Activated naive CD4-positive, alpha-beta T cell treated with anti-CD3 and anti-CD28 coated beads for 36 hours (primary cell): ENCODE measurements at regions of chr7 and their contacts with region 1.

Region 1: GRCh38 chr7:139340037-139340807 is 915 bp upstream of the FMC1 start:
- DNase-seq: peak; percentile 100
- H3K4me3 Mint-ChIP-seq: peak overlapping the region; percentile 93
- H3K27ac Mint-ChIP-seq: peak overlapping the region; percentile 99
- H3K4me1 Mint-ChIP-seq: peaks cover 22% of the 10 kb centered on the region
- H3K27me3 Mint-ChIP-seq: peaks cover 3% of the 10 kb centered on the region

Region 2: DNA sequence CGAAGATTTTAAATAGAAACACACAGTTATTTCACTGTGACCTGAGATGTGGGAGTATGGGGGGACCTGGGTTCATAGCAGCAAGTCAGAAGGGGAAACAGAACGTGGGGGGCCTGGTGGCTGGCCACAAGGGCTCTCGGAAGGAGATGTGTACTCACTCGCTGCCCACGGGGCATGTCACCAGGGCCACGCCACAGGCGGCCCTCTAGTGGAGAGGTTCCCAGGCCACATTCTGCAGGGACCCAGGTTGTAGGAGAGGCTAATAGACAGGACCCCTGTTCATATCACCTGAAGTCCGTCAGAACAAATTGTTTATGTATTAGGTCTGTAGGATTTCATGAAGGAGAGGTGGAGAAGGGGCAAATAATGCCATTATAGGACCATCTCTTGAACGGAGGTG is 613.9 kb before region 1 on chr7:
- CTCF ChIA-PET with region 1: no interaction called
- intact Hi-C with region 1: no loop called
- DNase-seq: no peak
- H3K4me3 Mint-ChIP-seq: no peak overlapping the region
- H3K27ac Mint-ChIP-seq: no peak overlapping the region
- H3K4me1 Mint-ChIP-seq: no peaks in the 10 kb centered on the region
- H3K27me3 Mint-ChIP-seq: no peaks in the 10 kb centered on the region

Region 3: DNA sequence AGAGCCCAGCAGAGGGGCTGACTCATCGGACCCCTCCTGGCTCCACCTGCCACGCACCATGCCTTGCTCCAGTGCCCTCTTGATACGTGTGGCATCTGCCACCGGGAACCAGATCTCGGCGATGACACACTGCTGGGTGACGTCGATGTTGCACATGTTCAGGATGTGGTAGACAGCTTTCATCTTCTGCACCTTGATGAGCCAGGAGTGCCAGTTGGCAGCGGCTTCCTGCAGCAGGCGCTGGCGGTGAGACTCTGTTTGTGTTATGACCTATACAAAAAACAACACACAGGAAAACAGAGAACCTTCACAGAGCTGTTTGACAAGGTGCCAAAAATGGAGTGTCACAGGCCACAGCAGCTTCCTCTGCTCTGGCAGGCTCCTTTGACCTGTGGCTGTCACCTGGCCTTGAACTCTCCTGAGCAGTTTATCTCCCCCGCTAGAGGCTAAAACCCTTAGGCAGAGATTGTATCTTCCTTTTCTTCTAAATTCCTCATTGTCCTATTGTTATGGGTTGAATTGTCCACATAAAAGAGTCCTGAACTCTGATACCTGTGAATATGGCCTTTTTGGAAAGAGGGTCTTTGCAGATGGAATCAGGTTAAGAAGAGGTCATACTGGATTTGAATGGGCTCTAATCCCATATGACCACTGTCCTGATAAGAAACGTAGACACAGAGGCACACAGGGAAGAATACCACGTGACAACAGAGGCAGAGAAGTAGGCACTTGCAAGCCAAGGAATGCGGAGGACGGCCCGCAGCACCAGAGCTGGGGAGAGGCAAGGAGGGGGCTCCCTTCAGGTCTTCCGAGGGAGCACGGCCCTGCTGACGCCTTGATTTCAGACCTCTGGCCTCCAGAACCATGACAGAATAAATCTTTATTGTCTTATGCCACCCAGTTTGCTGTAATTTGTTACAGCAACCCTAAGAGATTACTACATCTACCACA is 587.4 kb before region 1 on chr7:
- CTCF ChIA-PET with region 1: no interaction called
- intact Hi-C with region 1: loop called (anchors 1 kb)
- DNase-seq: peak; percentile 98
- H3K4me3 Mint-ChIP-seq: no peak overlapping the region
- H3K27ac Mint-ChIP-seq: peak overlapping the region; percentile 80
- H3K4me1 Mint-ChIP-seq: peaks cover 55% of the 10 kb centered on the region
- H3K27me3 Mint-ChIP-seq: no peaks in the 10 kb centered on the region

Region 4: DNA sequence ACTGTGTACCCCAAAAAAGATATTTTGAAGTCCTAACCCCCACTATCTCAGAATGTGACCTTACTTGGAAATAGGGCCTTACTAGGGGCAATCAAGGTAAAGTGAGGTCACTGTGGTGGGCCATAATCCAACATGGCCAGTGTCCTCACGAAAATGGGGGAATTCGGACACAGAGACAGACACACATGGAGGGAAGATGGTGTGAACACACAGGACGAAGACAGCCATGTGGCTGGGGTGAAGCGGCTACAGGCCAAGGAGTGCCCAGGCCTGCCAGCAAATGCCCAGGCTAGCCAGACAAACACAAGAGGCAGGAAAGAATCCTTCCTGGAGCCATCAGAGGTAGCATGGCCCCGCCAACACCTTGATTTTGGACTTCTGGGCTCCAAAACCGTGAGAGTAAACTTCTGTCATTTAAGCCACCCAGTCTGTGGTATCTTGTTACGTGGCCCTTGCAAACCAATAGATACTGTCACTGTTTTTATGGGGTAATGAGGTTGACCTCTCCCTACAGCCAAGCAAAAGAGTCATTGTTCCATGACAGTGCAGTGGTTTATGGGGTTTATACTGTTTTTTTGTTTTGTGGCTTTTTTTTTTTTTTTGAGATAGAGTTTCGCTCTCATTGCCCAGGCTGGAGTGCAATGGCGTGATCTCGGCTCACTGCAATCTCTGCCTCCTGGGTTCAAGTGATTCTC is 392.0 kb before region 1 on chr7:
- CTCF ChIA-PET with region 1: no interaction called
- intact Hi-C with region 1: no loop called
- DNase-seq: no peak
- H3K4me3 Mint-ChIP-seq: no peak overlapping the region
- H3K27ac Mint-ChIP-seq: no peak overlapping the region
- H3K4me1 Mint-ChIP-seq: no peaks in the 10 kb centered on the region
- H3K27me3 Mint-ChIP-seq: no peaks in the 10 kb centered on the region

Region 5: GRCh38 chr7:139035586-139036353 is 304.5 kb before region 1 on chr7 and contains the start of gene ZC3HAV1L:
- CTCF ChIA-PET with region 1: no interaction called
- intact Hi-C with region 1: loop called (anchors 5 kb)
- DNase-seq: peak; percentile 58
- H3K4me3 Mint-ChIP-seq: peak within 1 kb of the TSS; percentile 79
- H3K27ac Mint-ChIP-seq: peak within 1 kb of the TSS; percentile 37
- H3K4me1 Mint-ChIP-seq: peaks cover 18% of the 10 kb centered on the region
- H3K27me3 Mint-ChIP-seq: no peaks in the 10 kb centered on the region
- total RNA-seq, gene ZC3HAV1L: 4.5 to 5.1 TPM

Region 6: DNA sequence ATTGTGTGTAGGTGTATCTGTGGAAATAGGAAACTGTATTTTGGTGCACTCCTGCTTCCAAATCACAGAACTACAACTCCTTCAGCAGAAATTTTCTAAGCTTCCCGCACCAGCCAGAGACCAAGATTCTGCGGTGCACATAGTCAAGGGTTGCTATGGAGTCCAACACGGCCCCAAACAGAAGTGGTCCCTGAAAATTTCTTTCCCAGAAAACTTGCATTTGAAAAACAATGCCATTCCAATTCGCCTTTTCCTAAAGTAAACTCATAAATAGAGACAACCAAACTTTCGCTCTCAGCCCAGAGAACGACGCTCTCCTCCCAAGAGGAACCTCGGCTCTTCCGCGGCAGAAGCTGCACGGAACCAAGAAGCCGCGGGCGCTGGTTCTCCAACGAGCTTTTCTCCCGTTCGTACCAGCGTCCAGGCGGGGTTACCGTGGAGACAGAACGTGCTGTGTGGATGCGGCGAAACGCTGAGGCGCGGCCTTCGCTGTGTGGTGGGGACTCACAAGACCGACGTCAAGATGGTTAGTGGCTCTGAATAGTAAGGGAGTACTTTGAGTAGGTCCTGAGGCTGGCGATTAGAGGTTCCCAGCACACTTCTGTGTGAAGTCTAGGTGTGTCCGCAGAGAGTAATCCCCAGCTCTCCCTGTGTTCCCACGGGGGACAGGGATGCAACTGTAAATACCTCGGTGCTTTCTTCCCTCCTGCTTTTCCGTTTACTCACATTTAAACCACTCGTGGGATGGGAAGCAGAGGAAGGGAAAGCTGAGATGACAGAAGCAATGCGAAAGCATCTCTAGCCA is 206.7 kb before region 1 on chr7:
- CTCF ChIA-PET with region 1: no interaction called
- intact Hi-C with region 1: loop called (anchors 1 kb)
- DNase-seq: peak; percentile 92
- H3K4me3 Mint-ChIP-seq: peak overlapping the region; percentile 84
- H3K27ac Mint-ChIP-seq: peak overlapping the region; percentile 68
- H3K4me1 Mint-ChIP-seq: peaks cover 22% of the 10 kb centered on the region
- H3K27me3 Mint-ChIP-seq: no peaks in the 10 kb centered on the region

Region 7: GRCh38 chr7:139271718-139272628 is 68.2 kb before region 1 on chr7:
- CTCF ChIA-PET with region 1: no interaction called
- intact Hi-C with region 1: no loop called
- DNase-seq: no peak
- H3K4me3 Mint-ChIP-seq: no peak overlapping the region
- H3K27ac Mint-ChIP-seq: no peak overlapping the region
- H3K4me1 Mint-ChIP-seq: no peaks in the 10 kb centered on the region
- H3K27me3 Mint-ChIP-seq: no peaks in the 10 kb centered on the region

Region 8: GRCh38 chr7:139431010-139431409 is 90.8 kb after region 1 on chr7:
- CTCF ChIA-PET with region 1: no interaction called
- intact Hi-C with region 1: loop called (anchors 1 kb)
- DNase-seq: no peak
- H3K4me3 Mint-ChIP-seq: no peak overlapping the region
- H3K27ac Mint-ChIP-seq: no peak overlapping the region
- H3K4me1 Mint-ChIP-seq: peaks cover 5% of the 10 kb centered on the region
- H3K27me3 Mint-ChIP-seq: no peaks in the 10 kb centered on the region

Region 9: DNA sequence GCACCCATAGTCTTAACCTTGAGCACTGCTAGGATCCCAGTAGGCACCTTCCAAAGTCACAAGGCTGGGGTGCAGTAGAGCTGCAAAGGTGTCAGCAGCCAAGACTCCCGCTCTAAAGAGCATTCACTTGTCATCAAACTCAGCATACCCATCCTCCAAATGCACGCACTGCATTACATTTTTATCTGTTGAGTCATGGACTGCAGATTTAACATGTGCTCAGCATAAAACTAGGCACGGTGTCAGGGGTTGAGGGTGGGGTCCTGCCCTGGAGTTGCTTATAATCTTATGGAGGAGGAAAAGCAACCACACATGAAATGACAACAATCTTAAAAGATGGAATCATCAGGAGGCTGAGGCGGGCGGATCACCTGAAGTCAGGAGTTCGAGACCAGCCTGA is 619.9 kb after region 1 on chr7:
- CTCF ChIA-PET with region 1: no interaction called
- intact Hi-C with region 1: no loop called
- DNase-seq: no peak
- H3K4me3 Mint-ChIP-seq: no peak overlapping the region
- H3K27ac Mint-ChIP-seq: no peak overlapping the region
- H3K4me1 Mint-ChIP-seq: no peaks in the 10 kb centered on the region
- H3K27me3 Mint-ChIP-seq: no peaks in the 10 kb centered on the region

Region 10: DNA sequence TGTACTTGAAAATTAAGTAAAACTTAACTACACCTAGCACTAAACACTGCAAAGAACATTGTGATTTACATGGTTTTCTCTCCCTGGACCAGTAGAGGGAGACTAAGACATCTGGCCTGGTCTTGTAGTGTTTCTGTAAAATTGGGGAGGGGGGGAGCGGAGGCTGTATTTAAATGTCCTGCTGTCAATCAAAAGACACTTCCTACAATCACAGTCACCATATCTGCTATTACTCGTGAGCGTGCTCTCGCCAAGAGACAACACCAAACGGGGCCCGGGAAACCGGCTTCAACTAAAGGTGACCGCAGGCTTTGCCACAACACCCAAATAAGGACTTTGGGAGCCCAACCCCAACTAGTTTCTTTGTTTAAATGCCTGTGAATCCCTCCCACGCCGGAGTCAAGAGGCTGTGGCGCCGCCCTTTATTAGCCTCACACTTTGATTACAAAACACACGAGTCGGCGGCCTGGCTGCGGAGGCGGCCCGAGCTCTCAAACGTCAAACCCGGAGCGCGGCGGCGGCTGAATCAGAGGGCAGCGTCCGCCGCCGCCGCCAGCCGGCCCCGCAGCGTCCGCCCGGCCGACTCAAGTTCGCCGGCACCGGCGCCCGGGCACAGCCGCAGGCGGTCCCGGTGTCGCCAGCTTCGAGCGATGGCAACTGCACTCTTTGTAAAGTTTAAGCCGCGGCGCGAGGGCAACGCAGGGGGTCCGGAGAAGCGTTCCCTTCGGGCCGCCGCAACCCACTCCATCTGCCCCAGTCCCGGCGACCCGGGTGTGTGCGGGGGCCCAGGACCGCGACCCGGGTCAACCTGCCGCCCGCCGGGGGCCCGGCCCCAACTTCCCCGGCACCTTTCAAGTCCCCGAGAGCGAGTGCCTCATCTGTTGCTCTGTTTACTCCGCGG is 835.2 kb after region 1 on chr7:
- CTCF ChIA-PET with region 1: no interaction called
- intact Hi-C with region 1: loop called (anchors 1 kb)
- DNase-seq: peak; percentile 97
- H3K4me3 Mint-ChIP-seq: peak overlapping the region; percentile 81
- H3K27ac Mint-ChIP-seq: peak overlapping the region; percentile 89
- H3K4me1 Mint-ChIP-seq: peaks cover 44% of the 10 kb centered on the region
- H3K27me3 Mint-ChIP-seq: no peaks in the 10 kb centered on the region